Naive thymus-derived CD8-positive, alpha-beta T cell (primary cell): ENCODE measurements at regions of chr22 and their contacts with region 1.

Region 1: DNA sequence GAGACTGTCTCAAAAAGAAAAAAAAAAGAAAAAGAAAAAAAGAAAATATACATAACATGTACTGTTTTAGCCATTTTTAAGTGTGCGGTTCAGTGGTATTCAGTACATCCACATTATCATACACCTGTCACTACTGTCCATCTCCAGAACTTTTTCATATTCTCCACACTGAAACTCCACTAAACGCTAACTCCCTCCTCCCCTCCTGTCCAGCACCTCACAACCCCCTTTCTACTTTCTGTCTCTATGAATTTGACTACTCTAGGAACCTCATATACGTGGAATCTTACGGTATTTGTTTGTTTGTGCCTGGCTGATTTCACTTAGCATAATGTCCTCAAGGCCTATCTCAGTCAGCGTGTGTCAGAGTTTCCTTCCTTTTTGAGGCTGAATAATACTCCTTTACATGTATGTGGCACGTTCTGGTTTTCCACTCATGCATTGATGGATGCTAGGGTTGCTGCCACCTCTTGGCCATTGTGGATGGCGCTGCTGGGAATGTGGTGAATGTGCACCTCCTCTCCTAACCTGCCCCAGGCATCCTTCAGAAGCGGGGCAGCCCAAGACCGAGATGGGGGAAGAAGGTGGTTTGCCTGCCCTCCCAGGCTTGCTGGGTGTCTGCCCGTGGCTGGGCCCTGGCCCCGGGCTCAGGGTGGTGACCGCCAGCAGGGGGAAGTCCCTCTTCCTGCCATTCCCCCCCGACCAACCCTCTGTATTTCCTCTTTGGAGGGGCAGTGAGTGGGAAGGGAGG is 60.5 kb downstream of the BCR start:
- DNase-seq: no peak
- ATAC-seq: no peak
- H3K4me3 Mint-ChIP-seq: peak overlapping the region in 4 of 10 donors; percentile 17 to 78 (median 48)
- H3K27ac Mint-ChIP-seq: peak overlapping the region; percentile 76 to 99 (median 94)
- H3K4me1 Mint-ChIP-seq: peaks cover 46 to 89% (median 78%) of the 10 kb centered on the region in 4 donors
- H3K27me3 Mint-ChIP-seq: no peaks in the 10 kb centered on the region

Region 2: GRCh38 chr22:23225724-23226496 is 14.9 kb before region 1 on chr22:
- POLR2A ChIA-PET with region 1: interaction called, 24 read pairs
- DNase-seq: peak in 9 of 10 donors; percentile 13 to 76 (median 36)
- ATAC-seq: peak; percentile 84 to 87
- H3K4me3 Mint-ChIP-seq: peak overlapping the region; percentile 29 to 74 (median 64)
- H3K27ac Mint-ChIP-seq: peak overlapping the region; percentile 49 to 94 (median 88)
- H3K4me1 Mint-ChIP-seq: peaks cover 60 to 89% (median 84%) of the 10 kb centered on the region in 4 donors
- H3K27me3 Mint-ChIP-seq: no peaks in the 10 kb centered on the region

Region 3: DNA sequence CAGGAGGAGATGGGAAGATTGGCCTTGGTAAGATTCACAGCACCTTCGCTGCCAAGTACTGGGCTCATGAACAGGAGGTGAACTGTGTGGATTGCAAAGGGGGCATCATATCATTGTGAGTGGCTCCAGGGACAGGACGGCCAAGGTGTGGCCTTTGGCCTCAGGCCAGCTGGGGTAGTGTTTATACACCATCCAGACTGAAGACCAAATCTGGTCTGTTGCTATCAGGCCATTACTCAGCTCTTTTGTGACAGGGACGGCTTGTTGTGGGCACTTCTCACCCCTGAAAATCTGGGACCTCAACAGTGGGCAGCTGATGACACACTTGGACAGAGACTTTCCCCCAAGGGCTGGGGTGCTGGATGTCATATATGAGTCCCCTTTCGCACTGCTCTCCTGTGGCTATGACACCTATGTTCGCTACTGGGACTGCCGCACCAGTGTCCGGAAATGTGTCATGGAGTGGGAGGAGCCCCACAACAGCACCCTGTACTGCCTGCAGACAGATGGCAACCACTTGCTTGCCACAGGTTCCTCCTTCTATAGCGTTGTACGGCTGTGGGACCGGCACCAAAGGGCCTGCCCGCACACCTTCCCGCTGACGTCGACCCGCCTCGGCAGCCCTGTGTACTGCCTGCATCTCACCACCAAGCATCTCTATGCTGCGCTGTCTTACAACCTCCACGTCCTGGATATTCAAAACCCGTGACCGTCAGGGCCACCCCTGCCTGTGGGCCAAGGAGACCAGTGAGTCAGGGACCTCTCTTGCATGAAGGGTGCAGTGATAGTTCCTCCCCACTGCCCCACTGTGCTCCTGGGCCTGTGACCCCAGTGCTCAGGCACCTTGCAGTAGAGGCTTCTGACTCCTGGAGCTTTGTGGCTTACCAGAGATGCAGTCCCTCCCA is 23.1 kb after region 1 on chr22:
- POLR2A ChIA-PET with region 1: no interaction called
- DNase-seq: peak in 9 of 10 donors; percentile 17 to 69 (median 39)
- ATAC-seq: peak; percentile 93 to 96
- H3K4me3 Mint-ChIP-seq: peak overlapping the region in 2 of 10 donors; percentile 7 to 48
- H3K27ac Mint-ChIP-seq: peak overlapping the region; percentile 19 to 95 (median 57)
- H3K4me1 Mint-ChIP-seq: peaks cover 0 to 17% (median 7%) of the 10 kb centered on the region in 4 donors
- H3K27me3 Mint-ChIP-seq: no peaks in the 10 kb centered on the region

Region 4: DNA sequence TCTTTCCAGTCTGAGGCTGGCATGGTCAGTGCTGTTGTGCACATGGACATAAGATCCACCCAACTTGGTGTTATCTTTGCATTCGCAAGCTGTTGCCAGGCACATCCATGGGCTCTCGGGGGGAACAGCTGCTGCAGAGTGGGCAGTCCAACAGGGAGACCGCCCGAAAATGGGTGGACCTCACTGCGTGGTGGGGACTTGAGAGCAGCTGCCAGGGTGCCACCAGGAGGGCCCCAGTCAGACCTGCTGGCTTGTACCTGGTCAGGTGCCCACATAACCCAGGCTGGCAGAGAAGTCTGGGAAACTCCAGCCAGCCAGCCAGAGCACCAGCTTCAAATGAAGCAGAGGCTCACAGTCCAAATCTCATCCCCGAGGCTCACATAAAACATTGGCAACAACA is 59.6 kb after region 1 on chr22:
- POLR2A ChIA-PET with region 1: no interaction called
- DNase-seq: peak in 1 of 10 donors; percentile 35
- ATAC-seq: no peak
- H3K4me3 Mint-ChIP-seq: no peak overlapping the region
- H3K27ac Mint-ChIP-seq: no peak overlapping the region
- H3K4me1 Mint-ChIP-seq: peaks cover 0 to 2% (median 0%) of the 10 kb centered on the region in 4 donors
- H3K27me3 Mint-ChIP-seq: no peaks in the 10 kb centered on the region